ENCODE measurements at regions of chr17 and their contacts with region 1.

Region 1: GRCh38 chr17:7561028-7561575 is 617 bp upstream of the SENP3 start:
- DNase-seq: peak; percentile 82
- H3K4me3 Mint-ChIP-seq: peak overlapping the region; percentile 92
- H3K27ac Mint-ChIP-seq: peak overlapping the region; percentile 90
- H3K4me1 Mint-ChIP-seq: peaks cover 34% of the 10 kb centered on the region
- H3K27me3 Mint-ChIP-seq: no peaks in the 10 kb centered on the region

Region 2: DNA sequence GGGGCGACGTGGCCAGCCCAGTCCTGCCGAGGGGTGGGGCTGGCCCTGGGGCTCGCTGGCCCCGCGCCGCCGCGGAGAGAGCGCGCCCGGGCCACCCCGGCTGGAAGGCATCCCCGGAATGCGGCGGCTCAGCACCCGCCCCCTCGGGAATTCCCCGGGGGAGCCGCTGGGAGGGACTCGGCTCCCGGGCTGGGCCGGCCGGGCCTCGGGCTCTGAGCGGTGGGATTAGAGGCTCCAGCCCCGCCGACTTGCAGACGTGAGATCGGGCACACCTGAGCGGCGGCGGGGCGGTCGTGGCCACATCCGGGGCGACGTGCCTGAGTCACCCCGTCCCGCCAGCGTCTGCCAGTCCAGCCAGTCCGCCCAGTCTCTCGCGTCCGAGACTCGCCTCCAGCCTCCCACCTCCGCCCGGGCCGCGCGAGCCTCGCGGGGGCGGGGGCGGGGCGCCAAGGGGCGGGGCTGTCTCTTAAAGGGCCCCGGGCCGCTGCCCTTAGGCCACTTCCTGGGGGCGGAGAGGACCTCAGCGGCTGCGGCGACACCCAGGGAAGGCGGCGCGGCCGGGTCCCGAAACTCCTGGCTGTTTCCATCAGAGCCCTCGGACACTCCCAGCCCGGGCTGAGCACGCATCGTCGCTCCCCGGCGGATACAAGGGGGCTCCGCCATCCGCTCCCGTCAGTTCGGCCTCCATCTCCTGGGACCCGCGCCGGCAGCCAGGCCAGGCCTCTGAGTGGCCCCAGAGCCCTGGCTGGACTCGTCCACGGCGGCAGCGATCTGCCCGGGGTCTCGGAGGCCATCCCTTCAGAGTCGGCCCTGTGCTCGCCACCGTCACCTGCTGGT is 209.2 kb before region 1 on chr17 and contains the start of gene KCTD11:
- intact Hi-C with region 1: loop called (anchors 1 kb)
- DNase-seq: peak; percentile 74
- H3K4me3 Mint-ChIP-seq: peak within 1 kb of the TSS; percentile 90
- H3K27ac Mint-ChIP-seq: peak within 1 kb of the TSS; percentile 87
- H3K4me1 Mint-ChIP-seq: peaks cover 32% of the 10 kb centered on the region
- H3K27me3 Mint-ChIP-seq: no peaks in the 10 kb centered on the region
- total RNA-seq, gene KCTD11: 8.0 and 8.5 TPM in 2 replicates

Region 3: DNA sequence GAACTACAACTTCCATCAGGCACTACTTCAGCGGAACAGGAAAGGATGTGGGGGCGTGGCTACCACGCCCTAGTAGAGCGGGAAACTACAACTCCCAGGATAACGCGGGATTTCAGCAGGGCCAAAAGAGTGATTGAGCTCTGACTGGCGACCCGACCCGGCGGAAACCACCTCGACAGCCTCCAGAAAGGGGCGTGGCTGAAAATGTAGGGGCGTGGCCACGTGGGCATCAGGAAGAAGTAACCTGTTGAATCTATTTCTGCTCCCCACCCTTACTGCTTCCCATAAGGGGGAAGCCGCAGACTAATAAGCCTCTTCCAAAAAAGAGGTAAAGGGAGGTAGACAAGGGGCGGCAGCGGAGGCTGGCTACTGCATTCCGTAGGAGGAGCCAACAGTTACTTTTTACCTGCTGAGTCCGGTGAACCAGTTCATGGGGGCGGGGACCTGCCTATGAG is 125.9 kb before region 1 on chr17 and contains the start of gene TMEM102:
- intact Hi-C with region 1: loop called (anchors 5 kb)
- DNase-seq: peak; percentile 98
- H3K4me3 Mint-ChIP-seq: peak within 1 kb of the TSS; percentile 85
- H3K27ac Mint-ChIP-seq: peak within 1 kb of the TSS; percentile 95
- H3K4me1 Mint-ChIP-seq: peaks cover 28% of the 10 kb centered on the region
- H3K27me3 Mint-ChIP-seq: peaks cover 10% of the 10 kb centered on the region
- total RNA-seq, gene TMEM102: 13.4 and 14.8 TPM in 2 replicates

Region 4: DNA sequence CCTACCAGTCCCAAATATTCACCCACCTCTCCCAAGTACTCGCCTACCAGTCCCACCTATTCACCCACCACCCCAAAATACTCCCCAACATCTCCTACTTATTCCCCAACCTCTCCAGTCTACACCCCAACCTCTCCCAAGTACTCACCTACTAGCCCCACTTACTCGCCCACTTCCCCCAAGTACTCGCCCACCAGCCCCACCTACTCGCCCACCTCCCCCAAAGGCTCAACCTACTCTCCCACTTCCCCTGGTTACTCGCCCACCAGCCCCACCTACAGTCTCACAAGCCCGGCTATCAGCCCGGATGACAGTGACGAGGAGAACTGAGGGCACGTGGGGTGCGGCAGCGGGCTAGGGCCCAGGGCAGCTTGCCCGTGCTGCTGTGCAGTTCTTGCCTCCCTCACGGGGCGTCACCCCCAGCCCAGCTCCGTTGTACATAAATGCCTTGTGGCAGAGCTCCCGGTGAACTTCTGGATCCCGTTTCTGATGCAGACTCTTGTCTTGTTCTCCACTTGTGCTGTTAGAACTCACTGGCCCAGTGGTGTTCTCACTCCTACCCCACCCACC is 47.2 kb before region 1 on chr17:
- intact Hi-C with region 1: loop called (anchors 1 kb)
- DNase-seq: no peak
- H3K4me3 Mint-ChIP-seq: no peak overlapping the region
- H3K27ac Mint-ChIP-seq: peak overlapping the region; percentile 25
- H3K4me1 Mint-ChIP-seq: peaks cover 5% of the 10 kb centered on the region
- H3K27me3 Mint-ChIP-seq: no peaks in the 10 kb centered on the region

Region 5: DNA sequence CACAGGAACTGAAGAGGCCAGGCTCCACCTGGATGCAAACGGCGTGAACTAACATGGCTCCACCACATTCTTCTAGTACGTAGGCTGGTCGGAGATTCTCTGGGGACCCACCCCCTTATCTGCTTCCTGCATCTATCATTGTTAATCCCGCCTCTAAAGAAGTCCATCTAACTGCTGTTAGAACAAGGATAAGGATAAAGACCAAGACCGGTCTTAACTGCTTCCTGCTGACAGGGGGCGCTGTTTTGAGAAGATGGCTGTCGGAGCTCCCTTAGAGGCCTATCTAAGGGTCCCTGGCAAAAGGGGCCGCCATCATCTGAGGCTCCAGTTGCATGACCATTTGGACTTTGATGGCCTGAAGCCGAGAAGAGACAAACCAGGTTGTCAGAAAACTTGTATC is 38.1 kb before region 1 on chr17:
- intact Hi-C with region 1: loop called (anchors 2 kb)
- DNase-seq: peak; percentile 26
- H3K4me3 Mint-ChIP-seq: no peak overlapping the region
- H3K27ac Mint-ChIP-seq: no peak overlapping the region
- H3K4me1 Mint-ChIP-seq: peaks cover 6% of the 10 kb centered on the region
- H3K27me3 Mint-ChIP-seq: no peaks in the 10 kb centered on the region

Region 6: DNA sequence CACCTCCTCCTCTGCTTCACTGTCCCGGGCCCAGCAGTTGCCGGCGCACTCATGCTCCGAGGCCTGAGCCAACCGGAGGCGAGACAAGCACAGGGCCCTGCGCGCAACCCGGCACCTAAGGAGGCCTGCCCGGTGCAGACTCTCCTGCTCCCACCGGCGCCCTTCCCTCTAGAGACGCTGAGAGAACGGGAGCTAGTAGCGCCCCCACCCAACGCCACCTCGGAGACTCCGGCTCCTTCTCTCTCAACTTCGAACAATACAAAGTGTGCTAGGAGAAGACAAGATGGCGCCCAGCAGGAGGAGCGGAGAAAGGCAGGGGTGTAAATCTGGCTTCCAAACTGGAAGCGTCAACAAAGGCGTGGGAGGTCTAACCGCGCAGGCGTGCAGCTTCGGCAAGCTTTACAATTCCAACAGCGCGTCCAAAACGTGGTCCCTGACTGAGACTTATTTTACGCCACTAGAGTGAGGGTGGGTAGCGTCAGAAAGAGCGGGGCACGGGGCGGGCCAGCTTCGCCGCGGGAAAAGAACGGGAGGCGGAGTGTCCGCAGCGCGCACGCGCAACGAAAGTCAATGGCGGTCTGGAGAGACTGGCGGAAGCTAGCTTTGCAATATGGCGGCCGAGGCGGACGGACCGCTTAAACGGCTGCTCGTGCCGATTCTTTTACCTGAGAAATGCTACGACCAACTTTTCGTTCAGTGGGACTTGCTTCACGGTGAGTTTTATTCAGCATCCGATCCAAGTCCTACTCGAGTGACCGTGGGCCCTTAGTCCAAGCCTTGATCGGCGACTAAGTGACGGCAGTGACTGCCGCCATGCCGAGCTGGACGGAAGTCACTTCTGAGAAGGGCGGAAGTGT is 22.4 kb after region 1 on chr17 and contains the start of gene MPDU1:
- intact Hi-C with region 1: loop called (anchors 1 kb)
- DNase-seq: peak; percentile 97
- H3K4me3 Mint-ChIP-seq: peak within 1 kb of the TSS; percentile 95
- H3K27ac Mint-ChIP-seq: peak within 1 kb of the TSS; percentile 100
- H3K4me1 Mint-ChIP-seq: peaks cover 43% of the 10 kb centered on the region
- H3K27me3 Mint-ChIP-seq: no peaks in the 10 kb centered on the region
- total RNA-seq, gene MPDU1: 98.6 and 106 TPM in 2 replicates

Region 7: GRCh38 chr17:7613769-7614421 is 52.8 kb after region 1 on chr17:
- intact Hi-C with region 1: no loop called
- DNase-seq: no peak
- H3K4me3 Mint-ChIP-seq: peak overlapping the region; percentile 89
- H3K27ac Mint-ChIP-seq: peak overlapping the region; percentile 82
- H3K4me1 Mint-ChIP-seq: peaks cover 25% of the 10 kb centered on the region
- H3K27me3 Mint-ChIP-seq: no peaks in the 10 kb centered on the region

Region 8: DNA sequence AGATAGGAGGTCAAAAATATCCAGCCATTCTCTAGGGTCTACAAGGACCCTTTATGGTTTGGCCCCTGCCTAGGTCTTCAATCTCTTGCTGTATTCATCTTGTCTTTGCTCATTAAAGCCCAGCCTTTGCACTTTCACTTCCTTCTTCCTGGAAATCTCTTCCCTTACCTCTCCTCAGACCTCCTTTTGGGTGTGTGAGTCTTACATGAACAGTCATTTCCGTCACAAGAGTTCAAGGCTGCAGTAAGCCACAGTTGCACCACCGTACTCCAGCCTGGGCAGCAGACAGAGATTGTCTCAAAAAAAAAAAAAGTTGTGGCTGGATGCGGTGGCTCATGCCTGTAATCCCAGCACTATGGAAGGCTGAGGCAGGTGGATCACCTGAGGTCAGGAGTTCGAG is 83.7 kb after region 1 on chr17:
- intact Hi-C with region 1: no loop called
- DNase-seq: no peak
- H3K4me3 Mint-ChIP-seq: no peak overlapping the region
- H3K27ac Mint-ChIP-seq: no peak overlapping the region
- H3K4me1 Mint-ChIP-seq: peaks cover 10% of the 10 kb centered on the region
- H3K27me3 Mint-ChIP-seq: peaks cover 10% of the 10 kb centered on the region

Measured in activated T-helper 2 cell treated with anti-CD3 and anti-CD28 coated beads, Interferon-gamma antibody, Interleukin-2, Interleukin-4, amounts not matched to agents 10 μg/mL and 5 μg/mL and 100 μg/mL, durations not matched to agents 14 hours and 24 hours and 36 hours (primary cell).